ENCODE measurements at regions of chr12 and their contacts with region 1.

Region 1: GRCh38 chr12:118372541-118373495 is at the start of gene TAOK3:
- DNase-seq: peak; percentile 98
- H3K4me3 Mint-ChIP-seq: peak within 1 kb of the TSS; percentile 97
- H3K27ac Mint-ChIP-seq: peak within 1 kb of the TSS; percentile 92
- H3K4me1 Mint-ChIP-seq: peaks cover 44% of the 10 kb centered on the region
- H3K27me3 Mint-ChIP-seq: peaks cover 15% of the 10 kb centered on the region
- total RNA-seq, gene TAOK3: 51.8 and 53.4 TPM in 2 replicates

Region 2: DNA sequence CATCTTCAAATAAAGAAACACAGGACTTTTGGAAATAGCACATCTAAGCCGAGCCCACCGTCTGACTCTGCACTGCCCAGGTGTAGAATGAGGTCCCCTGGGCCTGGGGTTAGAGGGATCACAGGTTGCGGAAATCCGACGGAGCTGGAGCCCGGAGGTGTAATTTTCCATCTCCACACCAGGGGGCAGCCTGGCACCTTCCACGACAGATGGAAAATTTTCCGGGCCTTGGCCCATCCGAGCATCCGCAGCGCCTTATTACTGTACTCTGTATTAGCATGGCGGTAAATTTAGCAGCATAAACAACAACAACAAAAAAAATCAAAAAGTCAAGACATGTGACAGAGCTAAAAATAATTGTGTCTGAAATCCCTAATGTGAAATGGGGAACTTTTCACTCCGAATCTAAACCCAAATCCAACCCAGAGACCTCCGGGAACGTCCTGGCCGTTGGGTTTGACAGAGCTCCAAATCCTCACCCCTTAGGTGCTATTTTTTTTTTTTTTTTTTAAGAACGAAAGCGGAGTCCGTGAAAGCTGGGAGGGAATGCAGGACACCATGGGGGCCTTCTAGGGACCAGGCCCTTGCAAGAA is 497.9 kb before region 1 on chr12:
- intact Hi-C with region 1: loop called (anchors 1 kb)
- DNase-seq: peak; percentile 87
- H3K4me3 Mint-ChIP-seq: no peak overlapping the region
- H3K27ac Mint-ChIP-seq: peak overlapping the region; percentile 41
- H3K4me1 Mint-ChIP-seq: peaks cover 8% of the 10 kb centered on the region
- H3K27me3 Mint-ChIP-seq: peaks cover 10% of the 10 kb centered on the region

Region 3: DNA sequence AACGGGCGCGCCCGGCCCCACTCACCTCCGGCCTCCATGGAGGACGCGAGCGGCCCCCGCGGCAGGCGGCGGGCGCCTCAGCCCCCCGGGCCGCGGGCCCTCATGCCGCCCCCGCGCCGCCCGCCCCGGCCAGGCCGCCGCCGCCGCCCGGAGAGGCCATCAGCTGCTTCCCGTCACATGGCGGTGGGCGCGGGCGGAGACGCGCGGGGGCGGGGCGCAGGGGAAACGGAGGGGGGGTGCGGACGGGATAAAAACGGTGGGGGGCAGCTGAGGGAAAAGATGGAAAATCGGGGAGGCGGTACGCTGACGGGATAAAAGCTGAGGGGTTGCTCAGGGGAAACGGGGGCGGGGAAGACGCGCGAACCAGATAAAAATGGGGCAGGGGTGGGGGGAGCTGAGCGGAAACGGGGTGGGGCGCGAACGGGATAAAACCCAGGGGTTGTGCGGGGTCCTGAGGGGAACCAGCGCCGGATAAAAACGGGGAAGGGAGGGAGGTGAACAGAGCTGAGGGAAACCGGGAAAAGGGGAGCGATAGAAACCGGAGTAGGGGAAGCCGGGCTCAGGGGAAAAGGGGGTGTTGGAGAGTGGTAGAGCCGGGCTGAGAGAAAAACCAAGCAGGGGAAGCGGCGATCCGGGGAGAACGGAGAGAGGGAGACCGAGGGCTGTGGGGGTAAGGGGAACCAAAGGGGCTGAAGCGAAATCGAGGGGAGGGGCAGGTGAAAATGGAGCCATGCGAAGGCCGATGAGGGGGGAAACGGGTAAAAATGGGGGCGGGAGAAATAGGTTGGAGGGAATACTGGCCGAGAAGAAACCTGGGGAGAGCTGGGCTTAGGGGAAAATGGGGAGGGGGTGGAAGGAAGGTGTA is 311.6 kb before region 1 on chr12 and contains the start of gene WSB2:
- intact Hi-C with region 1: loop called (anchors 2 kb)
- DNase-seq: peak; percentile 88
- H3K4me3 Mint-ChIP-seq: peak within 1 kb of the TSS; percentile 93
- H3K27ac Mint-ChIP-seq: peak within 1 kb of the TSS; percentile 97
- H3K4me1 Mint-ChIP-seq: peaks cover 48% of the 10 kb centered on the region
- H3K27me3 Mint-ChIP-seq: no peaks in the 10 kb centered on the region
- total RNA-seq, gene WSB2: 129 and 133 TPM in 2 replicates

Region 4: DNA sequence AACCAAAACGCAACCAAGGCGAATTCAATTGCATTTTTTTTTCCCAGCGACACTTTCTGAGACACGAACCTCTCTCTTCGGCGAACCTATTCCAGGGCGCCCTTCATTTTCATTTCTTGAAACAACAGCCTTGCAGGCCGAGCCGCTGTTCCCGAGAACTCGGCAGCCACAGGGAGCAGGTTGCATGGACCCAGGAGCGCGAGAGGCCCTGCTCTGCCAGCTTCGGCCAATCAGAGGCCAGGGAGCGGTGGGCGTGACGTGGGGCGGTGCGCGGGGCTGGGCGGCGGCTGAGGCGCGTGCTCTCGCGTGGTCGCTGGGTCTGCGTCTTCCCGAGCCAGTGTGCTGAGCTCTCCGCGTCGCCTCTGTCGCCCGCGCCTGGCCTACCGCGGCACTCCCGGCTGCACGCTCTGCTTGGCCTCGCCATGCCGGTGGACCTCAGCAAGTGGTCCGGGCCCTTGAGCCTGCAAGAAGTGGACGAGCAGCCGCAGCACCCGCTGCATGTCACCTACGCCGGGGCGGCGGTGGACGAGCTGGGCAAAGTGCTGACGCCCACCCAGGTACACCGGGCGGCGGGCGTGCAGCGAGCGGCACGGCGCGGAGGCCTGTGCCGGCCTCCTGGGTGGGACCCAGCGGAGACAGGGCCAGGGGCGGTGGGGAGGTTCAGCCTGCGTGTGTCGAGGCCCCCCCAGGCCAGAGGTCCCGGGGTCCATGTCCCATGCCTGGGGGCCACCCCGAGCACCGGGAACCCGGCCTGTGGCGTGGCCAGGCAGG is 236.8 kb before region 1 on chr12 and contains the start of gene PEBP1:
- intact Hi-C with region 1: loop called (anchors 1 kb)
- DNase-seq: peak; percentile 99
- H3K4me3 Mint-ChIP-seq: peak within 1 kb of the TSS; percentile 99
- H3K27ac Mint-ChIP-seq: peak within 1 kb of the TSS; percentile 95
- H3K4me1 Mint-ChIP-seq: peaks cover 24% of the 10 kb centered on the region
- H3K27me3 Mint-ChIP-seq: no peaks in the 10 kb centered on the region
- total RNA-seq, gene PEBP1: 206 and 209 TPM in 2 replicates

Region 5: GRCh38 chr12:118183705-118184104 is 189.1 kb before region 1 on chr12:
- intact Hi-C with region 1: loop called (anchors 1 kb)
- DNase-seq: no peak
- H3K4me3 Mint-ChIP-seq: no peak overlapping the region
- H3K27ac Mint-ChIP-seq: no peak overlapping the region
- H3K4me1 Mint-ChIP-seq: peaks cover 8% of the 10 kb centered on the region
- H3K27me3 Mint-ChIP-seq: no peaks in the 10 kb centered on the region

Region 6: GRCh38 chr12:118357257-118358007 is 15.4 kb before region 1 on chr12:
- intact Hi-C with region 1: loop called (anchors 1 kb)
- DNase-seq: peak; percentile 80
- H3K4me3 Mint-ChIP-seq: peak overlapping the region; percentile 95
- H3K27ac Mint-ChIP-seq: peak overlapping the region; percentile 93
- H3K4me1 Mint-ChIP-seq: peaks cover 38% of the 10 kb centered on the region
- H3K27me3 Mint-ChIP-seq: no peaks in the 10 kb centered on the region